K562 (cell line): ENCODE measurements at regions of chr10 and their contacts with region 1.

Region 1: DNA sequence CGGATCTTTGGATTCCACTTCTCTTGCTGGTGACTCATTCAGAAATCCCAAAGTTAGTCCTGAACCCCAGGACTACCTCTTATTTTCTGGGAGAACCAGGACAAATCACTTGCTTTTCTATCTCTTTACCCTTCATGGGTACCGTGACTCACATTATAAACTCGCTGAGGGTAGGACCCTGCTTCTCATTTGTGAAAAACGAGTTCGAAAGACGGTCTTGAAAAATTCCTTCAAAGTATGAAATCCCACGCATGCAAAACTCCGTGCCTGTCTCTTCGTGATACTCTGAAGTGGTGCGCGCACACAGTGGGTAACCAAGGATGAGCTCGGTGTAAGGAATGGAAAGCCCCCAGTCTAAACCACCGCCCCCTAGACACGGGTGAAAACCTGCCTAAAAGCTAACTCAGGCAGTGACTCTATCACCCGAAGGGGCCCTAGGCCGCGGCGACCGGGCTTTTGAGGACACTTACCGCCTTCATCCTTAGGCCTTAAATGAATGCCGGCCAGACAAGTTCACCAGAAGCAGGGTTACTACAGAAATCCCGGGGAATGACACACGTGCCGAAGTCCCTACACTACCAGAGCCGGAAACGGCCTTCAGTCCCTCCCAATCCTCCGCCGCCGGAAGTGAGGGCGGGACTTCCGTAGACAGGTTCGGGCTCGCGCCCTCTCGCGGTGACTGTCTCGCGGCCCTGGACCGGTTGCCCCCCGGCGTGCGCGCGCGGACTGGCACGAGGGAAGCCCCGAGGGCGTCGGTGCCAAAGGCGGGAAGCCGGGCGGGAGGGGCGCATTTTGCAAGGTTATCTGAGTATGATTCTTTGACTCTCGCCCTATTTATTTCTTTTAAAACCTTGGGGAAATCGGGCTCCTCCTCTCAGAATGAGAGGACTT is at the start of gene NOC3L:
- DNase-seq: peak; percentile 85 to 94 (median 86)
- ATAC-seq: peak; percentile 100
- H3K4me3 ChIP-seq: peak within 1 kb of the TSS; percentile 86
- H3K27ac ChIP-seq: peak within 1 kb of the TSS; percentile 81
- H3K4me1 ChIP-seq: peaks cover 3 to 5% of the 10 kb centered on the region in 2 experiments; a peak in 4 of 5 replicates
- H3K27me3 ChIP-seq: no peaks in the 10 kb centered on the region
- CTCF ChIP-seq: peak; percentile 69 to 83 (median 70)
- EP300 ChIP-seq: no peak
- POLR2A ChIP-seq: peak; percentile 82
- RAD21 ChIP-seq: peak in 1 of 2 experiments; percentile 17; a peak in 1 of 4 replicates
- polyA plus RNA-seq, gene NOC3L: 36.0 to 41.4 TPM

Region 2: GRCh38 chr10:94324609-94325540 is 37.7 kb before region 1 on chr10:
- CTCF ChIA-PET with region 1: no interaction called
- POLR2A ChIA-PET with region 1: no interaction called
- in situ Hi-C with region 1: no loop called
- intact Hi-C with region 1: no loop called
- DNase-seq: no peak
- ATAC-seq: no peak
- H3K4me3 ChIP-seq: no peak overlapping the region
- H3K27ac ChIP-seq: no peak overlapping the region
- H3K4me1 ChIP-seq: no peaks in the 10 kb centered on the region
- H3K27me3 ChIP-seq: no peaks in the 10 kb centered on the region
- CTCF ChIP-seq: no peak
- EP300 ChIP-seq: no peak
- POLR2A ChIP-seq: no peak
- RAD21 ChIP-seq: no peak

Region 3: GRCh38 chr10:94402015-94402842 is 39.6 kb after region 1 on chr10 and contains the start of gene TBC1D12:
- CTCF ChIA-PET with region 1: no interaction called
- POLR2A ChIA-PET with region 1: no interaction called
- in situ Hi-C with region 1: no loop called
- intact Hi-C with region 1: loop called (anchors 2 kb)
- DNase-seq: peak; percentile 73 to 95 (median 82)
- ATAC-seq: peak; percentile 91
- H3K4me3 ChIP-seq: peak within 1 kb of the TSS; percentile 76
- H3K27ac ChIP-seq: peak within 1 kb of the TSS; percentile 83
- H3K4me1 ChIP-seq: peaks cover 7 to 16% of the 10 kb centered on the region in 2 experiments; a peak in 3 of 5 replicates
- H3K27me3 ChIP-seq: no peaks in the 10 kb centered on the region
- CTCF ChIP-seq: no peak
- EP300 ChIP-seq: no peak
- POLR2A ChIP-seq: peak; percentile 70
- RAD21 ChIP-seq: no peak
- polyA plus RNA-seq, gene TBC1D12: 3.7 to 3.9 TPM

Region 4: DNA sequence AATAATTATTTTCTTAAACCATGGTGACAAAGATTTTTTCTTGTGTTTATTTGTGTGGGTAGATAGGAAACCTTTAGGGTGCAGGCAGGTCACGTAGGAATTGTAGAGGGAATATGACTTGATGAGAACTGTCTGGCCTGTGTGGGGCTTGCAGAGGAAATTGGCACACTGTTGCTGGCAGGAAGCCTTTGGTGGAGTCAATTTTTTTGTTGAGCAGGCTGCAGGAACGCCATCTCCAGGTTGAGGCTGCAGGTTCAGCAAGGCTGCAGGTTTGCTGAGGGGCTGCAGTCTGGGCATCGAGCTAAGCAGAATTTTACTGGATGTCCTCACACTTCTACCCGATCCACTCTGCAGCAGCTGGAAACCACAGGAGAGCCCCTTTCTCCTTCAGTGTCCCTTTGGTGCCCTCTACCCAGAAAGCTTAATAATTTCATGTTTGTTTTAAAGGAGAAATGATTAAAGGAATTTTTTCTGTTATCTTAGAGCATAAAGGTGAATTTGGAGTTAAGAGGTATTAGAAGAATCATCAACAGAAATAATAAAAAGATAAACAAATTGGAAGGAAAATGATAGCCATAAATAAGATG is 76.8 kb after region 1 on chr10:
- CTCF ChIA-PET with region 1: no interaction called
- POLR2A ChIA-PET with region 1: no interaction called
- in situ Hi-C with region 1: no loop called
- intact Hi-C with region 1: loop called (anchors 5 kb)
- DNase-seq: no peak
- ATAC-seq: no peak
- H3K4me3 ChIP-seq: no peak overlapping the region
- H3K27ac ChIP-seq: no peak overlapping the region
- H3K4me1 ChIP-seq: no peaks in the 10 kb centered on the region
- H3K27me3 ChIP-seq: no peaks in the 10 kb centered on the region
- CTCF ChIP-seq: no peak
- EP300 ChIP-seq: no peak
- POLR2A ChIP-seq: no peak
- RAD21 ChIP-seq: no peak